ENCODE measurements at regions of chr10 and their contacts with region 1.

Region 1: DNA sequence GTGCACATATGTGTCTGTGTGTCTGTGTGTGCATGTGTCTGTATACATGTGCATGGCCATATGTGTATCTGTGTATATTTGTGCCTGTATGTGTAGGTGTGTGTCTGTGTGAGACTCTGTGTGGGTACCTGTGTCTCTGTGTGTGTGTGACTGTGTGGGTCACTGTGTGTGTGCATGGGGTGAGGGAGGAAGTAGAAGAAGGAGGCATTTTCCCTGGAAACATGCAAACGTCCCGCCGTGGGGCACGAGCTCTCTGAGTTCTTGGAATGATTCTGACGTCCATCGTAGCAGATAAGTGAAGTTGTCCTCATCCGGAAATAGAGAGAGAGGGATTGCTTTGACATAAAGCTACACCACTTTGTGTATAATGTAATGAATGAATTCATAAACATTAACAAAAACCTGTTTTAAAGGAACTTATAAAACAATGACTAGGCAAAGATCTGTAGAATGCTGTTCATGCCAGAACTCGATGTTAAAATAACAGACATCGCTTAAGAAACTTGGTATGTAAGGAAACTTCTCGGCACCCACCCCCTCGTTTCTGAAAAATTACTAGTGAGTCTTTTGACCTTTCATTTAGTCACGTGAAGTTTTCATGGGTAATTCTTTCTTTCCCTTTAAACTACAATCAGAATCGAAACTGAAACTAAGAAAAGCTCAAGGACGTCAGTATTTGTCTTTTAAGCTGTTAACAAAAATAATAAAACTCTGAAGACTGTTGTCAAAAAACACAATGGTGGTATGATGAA is 43.6 kb upstream of the KLF6 start:
- DNase-seq: peak in 6 of 9 donors; percentile 40 to 66 (median 54)
- ATAC-seq: peak; percentile 63
- H3K4me3 ChIP-seq: peak overlapping the region; percentile 65
- H3K4me3 Mint-ChIP-seq: peak overlapping the region; percentile 73 to 88 (median 78)
- H3K27ac ChIP-seq: peak overlapping the region; percentile 73
- H3K27ac Mint-ChIP-seq: peak overlapping the region; percentile 80 to 92 (median 90)
- H3K4me1 ChIP-seq: peaks cover 15 to 17% of the 10 kb centered on the region in 2 donors
- H3K4me1 Mint-ChIP-seq: peaks cover 12 to 54% (median 22%) of the 10 kb centered on the region in 7 donors
- H3K27me3 ChIP-seq: no peaks in the 10 kb centered on the region
- H3K27me3 Mint-ChIP-seq: no peaks in the 10 kb centered on the region

Region 2: GRCh38 chr10:3816995-3817394 is 11.6 kb before region 1 on chr10:
- CTCF ChIA-PET with region 1: no interaction called
- POLR2A ChIA-PET with region 1: interaction called, 10 read pairs
- intact Hi-C with region 1: loop called in 1 of 2 experiments (anchors 1 kb)
- DNase-seq: no peak
- ATAC-seq: no peak
- H3K4me3 ChIP-seq: no peak overlapping the region
- H3K4me3 Mint-ChIP-seq: no peak overlapping the region
- H3K27ac ChIP-seq: no peak overlapping the region
- H3K27ac Mint-ChIP-seq: no peak overlapping the region
- H3K4me1 ChIP-seq: peaks cover 2 to 8% of the 10 kb centered on the region in 2 donors
- H3K4me1 Mint-ChIP-seq: peaks cover 1 to 39% (median 9%) of the 10 kb centered on the region in 7 donors
- H3K27me3 ChIP-seq: no peaks in the 10 kb centered on the region
- H3K27me3 Mint-ChIP-seq: no peaks in the 10 kb centered on the region

Region 3: DNA sequence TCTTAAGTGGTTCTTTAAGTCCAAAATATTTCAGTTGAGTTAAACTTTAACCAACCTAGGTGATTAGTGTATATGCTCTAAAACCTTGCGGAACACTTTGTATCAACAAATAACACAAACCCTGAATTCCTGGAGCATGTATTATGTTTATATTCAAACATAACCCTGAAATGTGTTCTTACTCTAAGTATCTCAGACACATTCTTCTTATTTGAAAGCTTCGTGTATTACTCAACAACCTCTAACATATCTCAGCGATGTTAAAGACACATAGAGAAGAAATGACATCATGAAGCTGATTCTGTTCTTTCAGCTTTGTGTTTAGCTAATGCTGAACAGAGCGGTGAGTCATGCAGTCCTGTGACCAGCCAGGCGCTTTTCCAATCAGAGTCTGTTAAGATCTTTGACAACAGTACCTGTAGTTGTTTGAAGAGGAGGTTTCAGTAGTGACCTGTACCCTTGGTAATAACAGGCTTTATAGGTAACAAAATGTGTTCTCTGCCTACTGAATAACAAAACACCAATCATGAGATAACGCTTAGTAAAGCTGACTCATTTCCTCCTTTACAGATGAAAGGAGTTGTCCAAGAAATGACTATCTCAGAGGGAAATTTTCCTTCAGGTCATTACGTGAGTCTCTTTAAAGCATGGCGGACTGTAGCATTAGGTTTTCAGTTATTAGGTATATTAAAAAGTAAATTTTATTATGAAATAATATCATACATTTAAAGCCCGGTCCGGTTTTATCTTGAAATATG is 23.7 kb after region 1 on chr10:
- CTCF ChIA-PET with region 1: no interaction called
- POLR2A ChIA-PET with region 1: interaction called, 4 read pairs
- intact Hi-C with region 1: loop called in 1 of 2 experiments (anchors 2 kb)
- DNase-seq: peak in 2 of 9 donors; percentile 28 to 55
- ATAC-seq: peak; percentile 87
- H3K4me3 ChIP-seq: no peak overlapping the region
- H3K4me3 Mint-ChIP-seq: peak overlapping the region in 1 of 10 donors; percentile 55
- H3K27ac ChIP-seq: no peak overlapping the region
- H3K27ac Mint-ChIP-seq: peak overlapping the region in 3 of 9 donors; percentile 70 to 92 (median 80)
- H3K4me1 ChIP-seq: peaks cover 5 to 12% of the 10 kb centered on the region in 2 donors
- H3K4me1 Mint-ChIP-seq: peaks cover 0 to 35% (median 8%) of the 10 kb centered on the region in 7 donors
- H3K27me3 ChIP-seq: no peaks in the 10 kb centered on the region
- H3K27me3 Mint-ChIP-seq: no peaks in the 10 kb centered on the region

Region 4: GRCh38 chr10:4162571-4163286 is 334.1 kb after region 1 on chr10:
- CTCF ChIA-PET with region 1: no interaction called
- POLR2A ChIA-PET with region 1: no interaction called
- intact Hi-C with region 1: no loop called
- DNase-seq: no peak
- ATAC-seq: no peak
- H3K4me3 ChIP-seq: no peak overlapping the region
- H3K4me3 Mint-ChIP-seq: no peak overlapping the region
- H3K27ac ChIP-seq: no peak overlapping the region
- H3K27ac Mint-ChIP-seq: no peak overlapping the region
- H3K4me1 ChIP-seq: no peaks in the 10 kb centered on the region
- H3K4me1 Mint-ChIP-seq: peaks cover 0 to 7% (median 0%) of the 10 kb centered on the region in 7 donors
- H3K27me3 ChIP-seq: peaks cover 0 to 2% of the 10 kb centered on the region in 2 donors
- H3K27me3 Mint-ChIP-seq: no peaks in the 10 kb centered on the region

Measured in naive thymus-derived CD4-positive, alpha-beta T cell (primary cell).